ENCODE measurements at regions of chr4 and their contacts with region 1.

Region 1: GRCh38 chr4:83267121-83267829 is 17.3 kb downstream of the COQ2 start:
- DNase-seq: no peak
- CTCF ChIP-seq: no peak

Region 2: GRCh38 chr4:83074086-83074704 is 193.1 kb before region 1 on chr4:
- in situ Hi-C with region 1: loop called (anchors 10 kb)
- DNase-seq: peak; percentile 76
- CTCF ChIP-seq: peak; percentile 63

Region 3: GRCh38 chr4:83093130-83093529 is 174.1 kb before region 1 on chr4:
- in situ Hi-C with region 1: no loop called
- DNase-seq: no peak
- CTCF ChIP-seq: no peak